ENCODE measurements at regions of chr19 and their contacts with region 1.

Region 1: DNA sequence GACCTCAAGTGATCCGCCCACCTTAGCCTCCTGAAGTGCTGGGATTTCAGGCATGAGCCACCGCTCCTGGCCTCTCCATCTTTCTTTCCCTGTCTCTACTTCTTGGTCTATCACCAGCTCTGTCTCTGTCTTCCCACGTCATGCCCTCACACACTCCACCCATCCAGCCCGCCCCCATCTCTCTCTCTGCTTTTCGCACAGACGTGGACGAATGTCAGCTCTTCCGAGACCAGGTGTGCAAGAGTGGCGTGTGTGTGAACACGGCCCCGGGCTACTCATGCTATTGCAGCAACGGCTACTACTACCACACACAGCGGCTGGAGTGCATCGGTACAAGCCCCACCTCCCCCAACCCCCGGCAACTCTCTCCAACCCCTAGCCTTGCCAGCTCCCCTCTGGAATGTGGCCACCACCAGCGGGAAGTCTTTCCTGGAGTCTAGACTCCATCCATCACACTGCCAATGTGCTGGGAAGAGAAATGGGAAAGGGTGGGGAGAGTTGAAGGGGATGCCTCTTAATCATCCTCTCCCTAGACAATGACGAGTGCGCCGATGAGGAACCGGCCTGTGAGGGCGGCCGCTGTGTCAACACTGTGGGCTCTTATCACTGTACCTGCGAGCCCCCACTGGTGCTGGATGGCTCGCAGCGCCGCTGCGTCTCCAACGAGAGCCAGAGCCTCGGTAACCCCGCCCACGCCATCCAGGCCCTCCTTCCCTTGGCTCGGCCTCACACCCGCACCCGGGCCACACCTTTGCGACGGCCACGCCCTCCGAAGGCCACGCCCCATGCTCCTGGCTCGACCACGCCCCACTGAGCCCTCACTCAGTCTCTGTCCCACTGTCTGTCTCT is 22.5 kb downstream of the LTBP4 start:
- DNase-seq: peak; percentile 18
- ATAC-seq: peak; percentile 50
- H3K4me3 ChIP-seq: no peak overlapping the region
- H3K27ac ChIP-seq: no peak overlapping the region
- H3K4me1 ChIP-seq: peaks cover 8% of the 10 kb centered on the region; the same call in 1 of the 2 replicates
- H3K27me3 ChIP-seq: no peaks in the 10 kb centered on the region
- CTCF ChIP-seq: no peak
- POLR2A ChIP-seq: no peak
- RAD21 ChIP-seq: no peak

Region 2: GRCh38 chr19:40331069-40331468 is 292.6 kb before region 1 on chr19:
- CTCF ChIA-PET with region 1: no interaction called
- POLR2A ChIA-PET with region 1: no interaction called
- dilution Hi-C with region 1: no loop called
- in situ Hi-C with region 1: no loop called
- intact Hi-C with region 1: no loop called
- DNase-seq: no peak
- ATAC-seq: no peak
- H3K4me3 ChIP-seq: no peak overlapping the region
- H3K27ac ChIP-seq: no peak overlapping the region
- H3K4me1 ChIP-seq: no peaks in the 10 kb centered on the region
- H3K27me3 ChIP-seq: no peaks in the 10 kb centered on the region
- CTCF ChIP-seq: no peak
- POLR2A ChIP-seq: no peak
- RAD21 ChIP-seq: no peak

Region 3: GRCh38 chr19:40603389-40604135 is 20.1 kb before region 1 on chr19:
- CTCF ChIA-PET with region 1: no interaction called
- POLR2A ChIA-PET with region 1: interaction called, 16 read pairs
- dilution Hi-C with region 1: no loop called
- in situ Hi-C with region 1: no loop called
- intact Hi-C with region 1: no loop called
- DNase-seq: peak; percentile 92
- ATAC-seq: peak; percentile 85
- H3K4me3 ChIP-seq: peak overlapping the region; percentile 9
- H3K27ac ChIP-seq: peak overlapping the region; percentile 96
- H3K4me1 ChIP-seq: peaks cover 20% of the 10 kb centered on the region
- H3K27me3 ChIP-seq: no peaks in the 10 kb centered on the region
- CTCF ChIP-seq: peak; percentile 21; the same call in 1 of the 2 replicates
- POLR2A ChIP-seq: no peak
- RAD21 ChIP-seq: no peak

Region 4: DNA sequence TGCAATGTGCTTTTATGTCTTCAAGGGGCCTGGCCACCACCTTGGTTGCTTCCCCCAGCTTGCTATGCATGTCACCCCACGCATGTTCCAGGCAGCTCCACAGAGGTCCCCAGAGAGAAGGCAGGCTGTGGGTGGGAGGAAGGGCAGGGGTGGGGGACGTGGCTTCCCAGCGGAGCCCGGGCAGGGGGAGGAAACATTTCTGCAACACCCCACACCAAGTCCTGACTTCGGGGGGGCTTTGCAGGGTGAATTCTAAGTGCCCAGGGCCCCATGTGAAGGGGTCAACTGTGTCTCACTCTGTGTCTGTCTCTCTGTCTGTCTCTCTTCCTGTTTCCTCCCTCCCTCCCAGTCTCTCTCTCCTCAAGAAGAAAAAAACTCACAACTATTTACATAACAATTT is 17.1 kb after region 1 on chr19:
- CTCF ChIA-PET with region 1: interaction called, 20 read pairs
- POLR2A ChIA-PET with region 1: no interaction called
- dilution Hi-C with region 1: no loop called
- in situ Hi-C with region 1: no loop called
- intact Hi-C with region 1: no loop called
- DNase-seq: peak; percentile 45
- ATAC-seq: peak; percentile 51
- H3K4me3 ChIP-seq: no peak overlapping the region
- H3K27ac ChIP-seq: peak overlapping the region; percentile 99
- H3K4me1 ChIP-seq: peaks cover 16% of the 10 kb centered on the region
- H3K27me3 ChIP-seq: no peaks in the 10 kb centered on the region
- CTCF ChIP-seq: no peak
- POLR2A ChIP-seq: no peak
- RAD21 ChIP-seq: no peak

Measured in IMR-90 (cell line).